ENCODE measurements at regions of chr9 and their contacts with region 1.

Region 1: DNA sequence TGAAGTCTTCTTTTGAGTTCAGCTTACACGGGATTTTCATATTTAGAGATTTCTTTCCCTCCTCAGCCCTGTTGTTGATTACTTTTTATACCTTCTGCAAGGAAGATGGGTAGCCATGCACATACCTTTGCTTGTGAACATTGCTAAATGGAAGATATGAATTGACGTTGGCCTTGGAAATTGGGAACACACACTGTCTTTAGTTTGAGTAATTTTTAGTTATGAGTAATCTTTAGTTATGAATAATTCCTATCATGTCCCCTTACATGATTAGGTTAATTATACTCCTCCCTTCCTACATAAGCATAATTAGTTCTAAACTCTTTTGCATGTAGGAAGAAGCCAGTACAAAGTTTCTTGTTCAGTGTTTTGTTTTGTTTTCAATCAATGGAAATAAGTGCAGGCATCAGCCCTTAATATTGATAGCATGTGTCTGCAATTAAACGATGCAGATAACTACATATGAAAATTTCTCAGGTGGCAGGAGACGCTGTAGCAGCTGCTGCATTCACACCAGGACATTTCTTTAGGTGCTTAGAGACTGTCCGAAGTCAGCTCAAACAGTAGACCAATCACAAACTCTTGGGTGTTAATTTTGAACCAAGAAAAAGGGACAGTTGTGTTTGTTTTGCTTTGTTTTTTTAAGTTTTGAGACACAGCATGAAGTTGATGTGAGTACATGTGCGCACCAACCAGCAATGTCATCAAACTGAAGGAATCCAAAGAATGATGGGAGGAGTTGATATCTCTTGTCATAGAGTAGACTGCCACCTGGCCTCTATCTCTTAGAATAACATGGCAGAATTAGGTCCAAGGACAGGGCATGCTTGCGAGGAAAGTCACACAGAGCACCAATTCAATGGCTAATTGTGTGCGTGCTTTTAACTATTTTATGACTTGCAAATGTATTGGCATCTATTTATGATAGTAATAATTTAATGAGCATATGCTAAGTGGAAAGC is 51.4 kb downstream of the SMARCA2 start:
- DNase-seq: peak in 4 of 5 donors; percentile 32 to 46 (median 41)
- H3K4me3 ChIP-seq: no peak overlapping the region
- H3K4me3 Mint-ChIP-seq: no peak overlapping the region
- H3K27ac ChIP-seq: no peak overlapping the region
- H3K27ac Mint-ChIP-seq: peak overlapping the region in 6 of 7 donors; percentile 22 to 84 (median 40)
- H3K4me1 ChIP-seq: peaks cover 4% of the 10 kb centered on the region
- H3K4me1 Mint-ChIP-seq: peaks cover 0 to 17% (median 14%) of the 10 kb centered on the region in 4 donors
- H3K27me3 ChIP-seq: no peaks in the 10 kb centered on the region
- H3K27me3 Mint-ChIP-seq: no peaks in the 10 kb centered on the region

Region 2: DNA sequence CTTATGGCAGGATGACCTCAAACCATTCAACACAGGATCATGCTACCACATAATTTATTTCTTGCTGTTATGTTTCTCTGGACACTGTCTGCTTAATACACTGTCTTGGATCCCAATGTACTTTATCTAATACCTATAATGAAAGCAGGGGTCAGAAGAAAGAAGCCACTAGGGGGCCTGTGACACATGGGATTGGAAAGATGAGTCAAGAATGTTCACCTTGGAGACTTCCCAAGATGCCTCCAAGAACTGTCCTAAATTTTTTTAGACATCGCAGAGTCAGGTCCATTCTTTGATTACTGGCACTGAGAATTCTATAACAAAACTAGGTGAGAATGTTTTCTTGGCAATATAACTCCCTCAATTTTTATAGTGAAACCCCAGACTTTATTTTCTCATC is 357.2 kb before region 1 on chr9:
- CTCF ChIA-PET with region 1: interaction called, 6 read pairs
- POLR2A ChIA-PET with region 1: no interaction called
- intact Hi-C with region 1: loop called (anchors 1 kb)
- DNase-seq: peak in 3 of 5 donors; percentile 3 to 8 (median 4)
- H3K4me3 ChIP-seq: no peak overlapping the region
- H3K4me3 Mint-ChIP-seq: no peak overlapping the region
- H3K27ac ChIP-seq: no peak overlapping the region
- H3K27ac Mint-ChIP-seq: no peak overlapping the region
- H3K4me1 ChIP-seq: no peaks in the 10 kb centered on the region
- H3K4me1 Mint-ChIP-seq: no peaks in the 10 kb centered on the region
- H3K27me3 ChIP-seq: no peaks in the 10 kb centered on the region
- H3K27me3 Mint-ChIP-seq: peaks cover 8 to 16% of the 10 kb centered on the region in 2 donors

Region 3: DNA sequence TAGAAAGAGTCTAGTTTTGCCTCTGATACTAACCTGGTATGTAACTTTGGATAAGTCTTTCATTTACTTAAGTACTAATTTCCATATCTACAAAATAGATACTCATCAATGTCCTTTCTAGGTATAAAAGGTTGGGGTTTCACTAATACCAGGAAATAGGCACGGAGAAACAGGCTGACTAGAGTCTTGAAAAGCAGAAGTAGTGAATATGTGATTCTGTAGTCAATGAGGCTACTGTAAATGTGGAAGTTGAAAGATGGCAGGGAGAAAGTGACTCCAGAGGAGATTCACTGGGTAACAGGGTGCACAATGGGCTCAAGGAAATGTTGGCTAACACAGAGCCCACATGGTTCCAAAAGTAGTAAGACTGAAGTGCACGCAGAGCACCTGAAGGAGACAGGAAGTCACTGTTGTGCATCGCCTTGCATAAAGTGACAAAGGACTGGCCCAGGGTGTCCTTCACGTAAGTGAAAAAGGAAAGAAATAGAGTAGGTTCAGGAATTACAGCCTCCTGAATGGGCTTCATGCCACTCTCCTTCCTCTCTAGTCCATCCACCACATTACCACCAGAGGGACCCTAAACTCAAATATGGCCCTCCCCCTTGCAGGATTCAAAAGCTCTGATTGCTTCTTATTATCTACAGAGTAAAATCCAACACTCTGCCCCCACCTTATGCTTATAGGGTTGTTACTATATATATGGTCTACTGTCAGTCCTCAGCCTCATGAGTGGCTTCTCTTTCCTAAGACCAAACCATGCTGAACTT is 339.4 kb before region 1 on chr9:
- CTCF ChIA-PET with region 1: interaction called, 5 read pairs
- POLR2A ChIA-PET with region 1: no interaction called
- intact Hi-C with region 1: loop called (anchors 2 kb)
- DNase-seq: peak in 4 of 5 donors; percentile 5 to 22 (median 14)
- H3K4me3 ChIP-seq: no peak overlapping the region
- H3K4me3 Mint-ChIP-seq: no peak overlapping the region
- H3K27ac ChIP-seq: no peak overlapping the region
- H3K27ac Mint-ChIP-seq: no peak overlapping the region
- H3K4me1 ChIP-seq: no peaks in the 10 kb centered on the region
- H3K4me1 Mint-ChIP-seq: peaks cover 0 to 1% (median 0%) of the 10 kb centered on the region in 4 donors
- H3K27me3 ChIP-seq: no peaks in the 10 kb centered on the region
- H3K27me3 Mint-ChIP-seq: peaks cover 4 to 6% of the 10 kb centered on the region in 2 donors

Region 4: DNA sequence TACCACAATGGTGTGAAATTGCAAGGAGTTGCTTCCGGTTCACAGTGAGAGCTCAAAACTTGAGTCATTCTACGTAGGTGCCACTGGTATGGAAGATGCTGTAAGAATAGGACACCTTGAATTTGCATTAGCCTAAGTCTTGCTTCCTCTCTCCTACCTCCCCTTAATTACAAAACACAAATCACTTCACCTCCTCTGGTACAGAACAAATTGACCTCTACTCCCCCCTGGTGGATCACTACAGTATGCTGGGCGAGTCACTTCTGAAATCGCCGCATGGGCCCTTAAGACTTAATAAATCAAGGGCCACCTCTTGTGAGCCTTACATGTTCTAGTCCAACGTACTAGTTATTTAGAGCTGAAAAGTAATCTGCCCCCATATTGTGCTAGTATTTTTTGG is 196.8 kb before region 1 on chr9:
- CTCF ChIA-PET with region 1: no interaction called
- POLR2A ChIA-PET with region 1: no interaction called
- intact Hi-C with region 1: loop called (anchors 5 kb)
- DNase-seq: peak; percentile 12 to 36 (median 22)
- H3K4me3 ChIP-seq: no peak overlapping the region
- H3K4me3 Mint-ChIP-seq: no peak overlapping the region
- H3K27ac ChIP-seq: no peak overlapping the region
- H3K27ac Mint-ChIP-seq: no peak overlapping the region
- H3K4me1 ChIP-seq: peaks cover 12% of the 10 kb centered on the region
- H3K4me1 Mint-ChIP-seq: peaks cover 5 to 23% (median 16%) of the 10 kb centered on the region in 4 donors
- H3K27me3 ChIP-seq: no peaks in the 10 kb centered on the region
- H3K27me3 Mint-ChIP-seq: no peaks in the 10 kb centered on the region

Region 5: DNA sequence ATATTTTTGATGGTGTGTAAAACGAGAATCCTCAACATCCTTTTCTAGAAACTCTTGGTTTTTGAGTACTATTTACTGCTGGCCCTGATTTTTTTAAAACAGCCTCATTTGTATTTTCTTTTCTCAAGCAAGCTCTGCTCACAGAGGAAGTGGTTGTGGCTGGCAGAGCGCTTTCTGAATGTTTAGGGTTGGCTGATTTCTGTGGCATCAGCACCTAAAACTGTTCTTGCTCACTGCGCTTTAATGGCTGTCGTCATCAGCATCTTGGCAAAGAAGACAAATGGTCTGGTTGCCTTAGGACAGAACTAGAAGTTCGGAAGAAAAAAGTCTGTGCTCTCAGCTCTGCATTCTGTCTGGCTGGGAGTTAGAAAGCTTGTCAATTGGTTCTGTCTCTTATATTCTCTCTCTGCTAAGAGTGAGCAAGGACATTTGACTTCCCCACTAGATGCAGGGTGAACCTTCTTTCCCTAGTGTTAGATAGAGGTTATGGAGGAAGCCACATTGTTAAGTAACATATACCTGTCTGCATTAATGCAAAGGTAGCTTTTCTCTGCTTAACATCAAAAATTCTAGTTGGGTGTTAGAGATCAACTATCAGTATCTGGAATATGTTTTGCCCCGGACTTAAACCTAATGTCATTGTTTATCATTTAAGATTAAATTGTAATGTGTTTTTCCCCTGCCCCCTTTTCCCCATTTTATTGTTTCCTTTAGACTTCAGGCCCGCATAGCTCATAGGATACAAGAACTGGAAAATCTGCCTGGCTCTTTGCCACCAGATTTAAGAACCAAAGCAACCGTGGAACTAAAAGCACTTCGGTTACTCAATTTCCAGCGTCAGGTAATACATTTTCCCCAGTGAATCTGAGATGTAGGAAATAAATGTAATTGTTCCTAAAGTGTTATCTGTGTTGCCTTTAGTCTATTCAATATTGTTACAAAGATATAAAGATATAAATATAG is 12.4 kb before region 1 on chr9:
- CTCF ChIA-PET with region 1: interaction called, 14 read pairs
- POLR2A ChIA-PET with region 1: interaction called, 7 read pairs
- intact Hi-C with region 1: loop called (anchors 1 kb)
- DNase-seq: peak; percentile 83 to 88 (median 87)
- H3K4me3 ChIP-seq: peak overlapping the region in 1 of 2 donors; percentile 33
- H3K4me3 Mint-ChIP-seq: peak overlapping the region; percentile 42 to 84 (median 73)
- H3K27ac ChIP-seq: peak overlapping the region; percentile 50
- H3K27ac Mint-ChIP-seq: peak overlapping the region; percentile 93 to 99 (median 96)
- H3K4me1 ChIP-seq: peaks cover 53% of the 10 kb centered on the region
- H3K4me1 Mint-ChIP-seq: peaks cover 42 to 70% (median 54%) of the 10 kb centered on the region in 4 donors
- H3K27me3 ChIP-seq: no peaks in the 10 kb centered on the region
- H3K27me3 Mint-ChIP-seq: no peaks in the 10 kb centered on the region

Measured in CD4-positive, alpha-beta memory T cell (primary cell).